Activated B cell treated with CpG ODN at 0.5 μM for 24 hours (primary cell): ENCODE measurements at regions of chr2 and their contacts with region 1.

Region 1: GRCh38 chr2:228039752-228040534 is 141.5 kb downstream of the SPHKAP start:
- DNase-seq: no peak
- ATAC-seq: no peak
- H3K4me3 Mint-ChIP-seq: no peak overlapping the region
- H3K27ac Mint-ChIP-seq: no peak overlapping the region
- H3K4me1 Mint-ChIP-seq: no peaks in the 10 kb centered on the region
- H3K27me3 Mint-ChIP-seq: no peaks in the 10 kb centered on the region
- CTCF ChIP-seq: no peak

Region 2: GRCh38 chr2:229586746-229587705 is 1547.1 kb after region 1 on chr2:
- CTCF ChIA-PET with region 1: no interaction called
- POLR2A ChIA-PET with region 1: no interaction called
- intact Hi-C with region 1: loop called (anchors 5 kb)
- DNase-seq: no peak
- ATAC-seq: no peak
- H3K4me3 Mint-ChIP-seq: no peak overlapping the region
- H3K27ac Mint-ChIP-seq: no peak overlapping the region
- H3K4me1 Mint-ChIP-seq: no peaks in the 10 kb centered on the region
- H3K27me3 Mint-ChIP-seq: peaks cover 22% of the 10 kb centered on the region
- CTCF ChIP-seq: no peak